Tibial artery (tissue), 4 donors: ENCODE measurements at regions of chr1 and their contacts with region 1.

Region 1: GRCh38 chr1:109923131-109923945 is 12.7 kb downstream of the CSF1 start:
- DNase-seq: no peak
- H3K4me3 ChIP-seq: no peak overlapping the region
- H3K27ac ChIP-seq: no peak overlapping the region
- H3K4me1 ChIP-seq: peaks cover 0 to 30% (median 18%) of the 10 kb centered on the region in 4 donors
- H3K27me3 ChIP-seq: no peaks in the 10 kb centered on the region
- CTCF ChIP-seq: peak in 1 of 2 experiments; percentile 30

Region 2: DNA sequence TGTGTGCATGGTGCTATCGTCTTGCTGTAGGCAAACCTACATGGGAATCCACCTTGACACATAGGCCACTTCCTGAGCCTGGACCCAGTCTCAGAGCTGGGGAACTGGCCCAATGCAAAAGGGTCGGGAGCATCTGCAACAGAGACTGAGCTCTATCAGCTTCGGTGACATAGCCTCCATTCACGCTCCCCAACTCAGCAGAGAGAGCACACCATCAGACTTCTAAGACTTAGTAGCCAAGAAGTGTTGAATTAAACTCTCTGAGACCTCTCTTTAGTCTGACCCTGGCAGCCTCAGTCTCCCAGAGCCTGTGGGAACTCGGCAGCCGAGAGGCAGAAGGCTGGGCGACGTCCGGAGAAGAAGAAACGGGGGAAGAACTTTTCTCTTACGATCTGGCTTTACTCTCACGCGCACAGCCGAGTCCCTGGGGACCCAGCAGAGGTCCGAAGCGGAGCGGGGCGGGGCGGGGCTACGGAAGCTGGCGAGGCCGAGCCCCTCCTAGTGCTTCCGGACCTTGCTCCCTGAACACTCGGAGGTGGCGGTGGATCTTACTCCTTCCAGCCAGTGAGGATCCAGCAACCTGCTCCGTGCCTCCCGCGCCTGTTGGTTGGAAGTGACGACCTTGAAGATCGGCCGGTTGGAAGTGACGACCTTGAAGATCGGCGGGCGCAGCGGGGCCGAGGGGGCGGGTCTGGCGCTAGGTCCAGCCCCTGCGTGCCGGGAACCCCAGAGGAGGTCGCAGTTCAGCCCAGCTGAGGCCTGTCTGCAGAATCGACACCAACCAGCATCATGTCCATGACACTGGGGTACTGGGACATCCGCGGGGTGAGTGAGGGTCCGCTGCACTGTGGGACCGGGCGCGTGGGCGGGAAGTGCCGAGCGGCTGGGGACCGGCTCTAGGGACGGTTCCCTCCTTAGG is 267.5 kb before region 1 on chr1 and contains the start of gene GSTM4:
- intact Hi-C with region 1: loop called (anchors 10 kb)
- DNase-seq: peak; percentile 87 to 94
- H3K4me3 ChIP-seq: peak within 1 kb of the TSS; percentile 59 to 84
- H3K27ac ChIP-seq: peak within 1 kb of the TSS; percentile 92 to 93
- H3K4me1 ChIP-seq: peaks cover 0 to 25% (median 13%) of the 10 kb centered on the region in 4 donors
- H3K27me3 ChIP-seq: no peaks in the 10 kb centered on the region
- CTCF ChIP-seq: peak in 1 of 2 experiments; percentile 6

Region 3: DNA sequence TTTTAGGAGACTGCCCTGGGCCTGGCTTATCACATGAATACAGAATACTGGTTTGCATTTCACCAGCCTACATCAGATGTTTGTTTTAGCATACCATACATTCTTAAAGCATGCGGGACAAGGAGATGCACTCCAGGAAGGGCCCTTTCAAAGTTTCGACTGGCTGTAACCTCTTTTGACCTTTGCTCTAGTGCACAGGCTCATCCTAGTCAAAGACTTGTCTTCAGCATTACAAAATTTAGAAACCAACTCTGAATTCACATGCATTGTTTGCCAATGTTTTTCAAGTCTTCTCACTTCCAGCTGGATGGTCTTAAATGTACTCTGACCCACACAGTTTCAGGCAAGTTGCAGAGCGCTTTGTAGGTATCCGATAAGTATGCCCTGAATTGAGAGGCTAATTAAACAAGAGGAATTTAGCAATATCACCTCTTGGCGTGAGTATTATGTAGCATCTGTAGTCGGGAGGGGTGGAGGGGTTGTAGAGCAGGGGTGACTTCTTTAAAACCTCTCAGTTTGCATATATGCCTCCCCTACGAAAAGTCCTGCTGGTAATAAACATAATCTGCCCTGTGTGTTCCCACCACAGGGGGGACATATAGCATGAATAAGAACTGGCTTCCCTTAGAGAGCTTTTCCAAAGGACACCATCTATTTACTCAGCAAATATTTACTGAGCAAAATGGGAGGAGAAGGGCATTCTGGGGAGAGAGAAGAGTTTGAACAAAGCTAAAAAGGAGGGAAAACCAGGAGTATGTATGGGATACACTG is 36.8 kb after region 1 on chr1:
- intact Hi-C with region 1: no loop called
- DNase-seq: no peak
- H3K4me3 ChIP-seq: no peak overlapping the region
- H3K27ac ChIP-seq: peak overlapping the region in 1 of 2 donors; percentile 21
- H3K4me1 ChIP-seq: peaks cover 0 to 22% (median 10%) of the 10 kb centered on the region in 4 donors
- H3K27me3 ChIP-seq: no peaks in the 10 kb centered on the region
- CTCF ChIP-seq: no peak